Common myeloid progenitor, CD34-positive (primary cell): ENCODE measurements at regions of chr2 and their contacts with region 1.

Region 1: DNA sequence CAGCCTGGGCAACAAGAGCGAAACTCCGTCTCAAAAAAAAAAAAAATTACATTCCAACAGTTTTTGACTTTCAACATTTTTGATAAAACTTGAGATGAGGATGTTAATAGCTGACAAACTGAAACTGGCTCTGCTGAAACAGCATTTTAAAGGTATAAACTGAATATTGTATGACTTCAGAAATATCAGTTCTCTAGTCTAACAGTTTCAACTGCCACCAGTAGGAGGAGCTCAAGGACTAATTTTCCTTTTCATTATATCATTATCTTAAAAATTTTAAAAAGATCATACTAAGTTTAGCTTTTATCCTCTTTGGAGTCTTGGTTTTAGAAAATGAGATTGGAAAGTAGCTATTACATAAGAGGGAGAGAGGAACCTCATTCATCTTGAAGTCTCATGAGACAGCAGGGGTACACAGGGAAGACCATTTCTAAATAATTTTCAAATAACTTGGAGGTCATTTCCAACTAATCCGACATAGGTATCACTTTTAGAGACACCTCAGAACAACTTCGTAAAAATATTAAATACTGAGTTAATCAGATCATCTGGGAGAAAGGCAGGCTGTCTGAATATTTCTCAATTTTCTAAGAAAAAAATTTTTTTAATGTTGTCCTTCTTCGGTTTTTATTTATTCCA is 37.6 kb upstream of the MCM6 start:
- DNase-seq: peak; percentile 57 to 84 (median 71)
- H3K4me3 ChIP-seq: no peak overlapping the region
- H3K27ac ChIP-seq: peak overlapping the region in 1 of 2 experiments; percentile 19
- H3K4me1 ChIP-seq: no peaks in the 10 kb centered on the region
- H3K27me3 ChIP-seq: no peaks in the 10 kb centered on the region

Region 2: DNA sequence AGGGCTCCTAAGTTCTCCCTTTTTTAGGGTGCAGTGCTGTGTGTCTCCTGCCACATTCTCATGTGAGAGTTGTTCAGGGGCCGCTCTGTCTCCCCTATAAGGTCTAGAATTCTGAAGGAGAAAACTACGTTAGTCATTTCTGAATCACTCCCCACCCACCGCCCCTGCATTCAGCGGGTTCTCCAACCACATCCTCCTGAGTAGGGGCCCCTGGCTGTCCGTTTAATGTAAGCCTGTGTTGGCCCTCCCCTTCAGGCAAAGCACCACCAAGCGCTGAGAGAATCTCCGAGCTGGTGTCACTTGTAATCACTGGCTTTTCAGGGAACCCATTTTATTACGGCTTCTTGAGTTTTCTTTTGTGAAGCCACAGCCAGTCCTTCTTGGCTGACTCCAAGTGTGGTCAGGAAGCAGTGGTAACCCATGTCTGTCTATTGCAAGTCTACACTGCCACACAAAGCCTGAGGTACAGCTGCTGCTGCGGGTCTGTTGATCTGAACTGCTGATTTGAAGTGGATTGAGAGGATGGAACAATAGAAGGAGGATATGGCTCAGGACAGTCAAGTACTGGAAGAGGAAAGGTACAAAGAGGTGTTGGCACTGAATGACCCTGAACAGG is 93.7 kb before region 1 on chr2:
- CTCF ChIA-PET with region 1: no interaction called
- POLR2A ChIA-PET with region 1: no interaction called
- DNase-seq: peak; percentile 49 to 93 (median 89)
- H3K4me3 ChIP-seq: peak overlapping the region in 6 of 7 experiments; percentile 23 to 52 (median 32)
- H3K27ac ChIP-seq: no peak overlapping the region
- H3K4me1 ChIP-seq: peaks cover 7 to 23% (median 18%) of the 10 kb centered on the region in 4 experiments
- H3K27me3 ChIP-seq: no peaks in the 10 kb centered on the region

Region 3: DNA sequence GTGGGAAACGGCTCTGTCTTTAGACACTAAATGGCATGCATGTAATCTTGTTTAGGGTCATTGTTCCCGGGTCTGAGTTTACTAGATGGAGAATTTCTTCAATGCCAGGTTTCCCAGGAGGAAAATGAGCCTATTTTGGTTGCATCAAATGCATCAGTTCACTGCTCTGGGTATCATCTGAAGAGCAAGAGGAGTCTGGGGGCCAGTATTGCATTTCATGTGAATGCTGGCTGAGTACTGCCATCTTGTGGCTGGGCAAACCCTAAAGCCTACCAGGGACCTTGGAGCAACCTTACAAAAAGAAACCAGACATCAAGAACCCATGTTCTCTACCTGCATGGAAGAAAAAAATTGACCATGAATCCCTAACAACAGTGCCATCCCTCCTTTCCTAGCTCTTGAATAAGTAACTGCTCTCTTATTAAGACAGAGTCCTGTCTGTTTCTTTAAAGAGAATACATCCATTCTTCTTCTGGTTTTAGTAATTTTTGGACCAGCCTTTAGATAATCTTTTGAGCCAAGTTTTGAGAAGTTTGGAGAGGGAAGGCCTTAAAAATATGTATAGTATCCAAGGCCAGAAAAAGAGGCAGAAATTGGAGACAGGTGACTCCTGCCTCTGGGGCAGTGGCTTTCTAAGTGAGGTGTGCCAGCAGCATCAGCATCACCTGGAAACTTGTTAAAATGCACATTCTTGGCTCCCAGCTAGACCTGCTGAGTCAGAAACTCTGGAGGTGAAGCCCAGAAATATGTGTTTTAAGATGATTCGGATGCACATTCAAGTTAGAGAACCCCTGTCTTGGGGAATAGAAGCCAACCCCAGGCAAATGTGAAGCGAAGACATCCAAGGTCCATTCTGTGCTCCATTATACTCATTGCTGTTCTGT is 465.1 kb after region 1 on chr2:
- CTCF ChIA-PET with region 1: interaction called, 238 read pairs
- POLR2A ChIA-PET with region 1: interaction called, 7 read pairs
- DNase-seq: peak; percentile 76 to 87 (median 80)
- H3K4me3 ChIP-seq: no peak overlapping the region
- H3K27ac ChIP-seq: no peak overlapping the region
- H3K4me1 ChIP-seq: peaks cover 14 to 25% (median 17%) of the 10 kb centered on the region in 4 experiments
- H3K27me3 ChIP-seq: no peaks in the 10 kb centered on the region

Region 4: GRCh38 chr2:136384531-136385303 is 470.9 kb after region 1 on chr2:
- CTCF ChIA-PET with region 1: interaction called, 238 read pairs
- POLR2A ChIA-PET with region 1: interaction called, 7 read pairs
- DNase-seq: peak; percentile 60 to 83 (median 79)
- H3K4me3 ChIP-seq: peak overlapping the region in 1 of 7 experiments; percentile 52
- H3K27ac ChIP-seq: no peak overlapping the region
- H3K4me1 ChIP-seq: peaks cover 13 to 27% (median 19%) of the 10 kb centered on the region in 4 experiments
- H3K27me3 ChIP-seq: no peaks in the 10 kb centered on the region